ENCODE measurements at regions of chr12 and their contacts with region 1.

Region 1: GRCh38 chr12:22018860-22019259 is 27.2 kb upstream of the CMAS start:
- DNase-seq: peak in 2 of 9 experiments; percentile 6 to 26
- ATAC-seq: no peak
- H3K4me3 ChIP-seq: no peak overlapping the region
- H3K4me3 Mint-ChIP-seq: no peak overlapping the region
- H3K27ac ChIP-seq: no peak overlapping the region
- H3K27ac Mint-ChIP-seq: no peak overlapping the region
- H3K4me1 ChIP-seq: no peaks in the 10 kb centered on the region
- H3K4me1 Mint-ChIP-seq: no peaks in the 10 kb centered on the region
- H3K27me3 ChIP-seq: no peaks in the 10 kb centered on the region
- H3K27me3 Mint-ChIP-seq: peaks cover 3% of the 10 kb centered on the region
- CTCF ChIP-seq: peak; percentile 55

Region 2: DNA sequence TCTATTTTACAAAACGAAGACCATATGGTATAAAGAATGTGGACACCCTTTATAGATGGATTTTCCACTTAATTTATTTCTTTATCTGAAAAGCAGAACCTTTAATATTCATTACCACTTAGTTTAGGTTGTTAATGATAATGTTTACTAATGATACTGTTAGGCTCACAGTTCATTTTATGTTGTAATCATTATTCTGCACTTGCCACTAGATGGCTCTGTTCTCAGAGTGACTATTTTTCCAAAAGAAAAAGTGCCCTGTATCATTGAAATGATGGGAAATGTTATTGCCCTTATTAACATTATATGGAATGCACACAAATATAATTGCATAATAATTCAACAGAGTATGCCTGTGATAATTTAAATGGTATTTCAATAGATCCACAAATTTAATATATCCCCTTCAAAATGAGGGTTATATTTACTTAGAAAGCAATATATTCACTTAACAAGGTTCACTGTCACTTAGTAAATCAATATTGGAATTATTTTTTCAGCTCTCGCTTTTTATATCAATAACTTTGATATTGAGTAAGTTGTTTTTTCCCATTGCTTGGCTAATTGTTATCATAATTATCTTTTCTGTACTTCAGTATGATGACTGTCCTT is 1554.8 kb before region 1 on chr12:
- CTCF ChIA-PET with region 1: no interaction called
- POLR2A ChIA-PET with region 1: no interaction called
- intact Hi-C with region 1: loop called in 1 of 2 experiments (anchors 10 kb)
- DNase-seq: no peak
- ATAC-seq: no peak
- H3K4me3 ChIP-seq: no peak overlapping the region
- H3K4me3 Mint-ChIP-seq: no peak overlapping the region
- H3K27ac ChIP-seq: no peak overlapping the region
- H3K27ac Mint-ChIP-seq: no peak overlapping the region
- H3K4me1 ChIP-seq: no peaks in the 10 kb centered on the region
- H3K4me1 Mint-ChIP-seq: no peaks in the 10 kb centered on the region
- H3K27me3 ChIP-seq: no peaks in the 10 kb centered on the region
- H3K27me3 Mint-ChIP-seq: no peaks in the 10 kb centered on the region
- CTCF ChIP-seq: peak; percentile 32

Region 3: DNA sequence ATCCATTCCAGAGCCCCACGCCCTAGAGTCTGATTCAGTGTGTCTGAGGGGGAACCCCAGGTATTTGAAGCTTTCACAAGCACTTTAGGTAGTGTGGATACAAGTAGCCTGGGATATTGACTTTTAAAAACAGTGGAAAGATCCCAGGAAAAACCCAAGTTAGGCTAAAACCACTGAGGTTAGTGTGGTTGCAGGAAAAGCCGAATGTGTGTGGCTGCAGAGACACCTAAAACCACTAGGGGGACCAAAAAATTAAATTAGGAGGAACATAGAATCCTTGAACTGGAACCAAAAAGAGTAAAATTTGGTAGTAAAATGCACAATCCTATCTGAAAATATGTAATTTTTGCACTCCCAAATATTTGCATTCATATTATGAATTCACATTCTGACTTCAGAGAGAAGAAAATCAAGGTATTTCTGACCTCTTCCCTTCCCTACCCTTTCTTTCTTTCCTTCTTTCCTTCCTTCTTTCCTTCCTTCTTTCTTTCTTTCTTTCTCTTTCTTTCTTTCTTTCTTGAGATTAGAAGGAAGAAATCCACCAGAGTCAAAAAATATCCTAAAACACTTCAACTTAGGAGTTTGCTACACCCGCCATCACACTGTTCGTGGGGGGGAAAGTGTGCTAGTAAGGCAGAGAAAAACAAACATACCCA is 722.0 kb before region 1 on chr12:
- CTCF ChIA-PET with region 1: no interaction called
- POLR2A ChIA-PET with region 1: no interaction called
- intact Hi-C with region 1: loop called (anchors 1 to 5 kb)
- DNase-seq: peak in 2 of 9 experiments; percentile 10 to 29
- ATAC-seq: no peak
- H3K4me3 ChIP-seq: no peak overlapping the region
- H3K4me3 Mint-ChIP-seq: no peak overlapping the region
- H3K27ac ChIP-seq: no peak overlapping the region
- H3K27ac Mint-ChIP-seq: no peak overlapping the region
- H3K4me1 ChIP-seq: no peaks in the 10 kb centered on the region
- H3K4me1 Mint-ChIP-seq: peaks cover 2% of the 10 kb centered on the region
- H3K27me3 ChIP-seq: no peaks in the 10 kb centered on the region
- H3K27me3 Mint-ChIP-seq: peaks cover 3% of the 10 kb centered on the region
- CTCF ChIP-seq: peak; percentile 71

Region 4: DNA sequence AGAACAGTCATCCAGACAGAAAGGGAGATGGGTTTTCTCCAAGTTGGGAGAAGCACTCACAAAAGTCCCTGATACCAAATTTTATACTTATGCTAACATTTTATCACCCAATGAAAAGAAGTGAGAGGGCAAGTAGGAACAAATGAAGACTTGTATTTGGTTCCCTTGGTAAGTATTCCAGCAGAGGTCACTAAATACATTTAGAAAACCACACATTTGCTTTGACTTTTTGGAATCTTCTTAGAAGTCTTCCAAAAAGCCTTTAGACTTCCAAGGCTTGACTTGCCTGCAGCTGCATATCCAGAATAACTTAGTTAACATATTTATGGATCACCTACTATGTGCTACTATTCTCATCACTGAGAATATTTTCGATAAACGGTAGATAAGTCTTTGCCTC is 411.2 kb before region 1 on chr12:
- CTCF ChIA-PET with region 1: interaction called, 4 read pairs
- POLR2A ChIA-PET with region 1: no interaction called
- intact Hi-C with region 1: loop called in 1 of 2 experiments (anchors 10 kb)
- DNase-seq: peak in 2 of 9 experiments; percentile 38 to 57
- ATAC-seq: no peak
- H3K4me3 ChIP-seq: no peak overlapping the region
- H3K4me3 Mint-ChIP-seq: no peak overlapping the region
- H3K27ac ChIP-seq: no peak overlapping the region
- H3K27ac Mint-ChIP-seq: no peak overlapping the region
- H3K4me1 ChIP-seq: peaks cover 10% of the 10 kb centered on the region
- H3K4me1 Mint-ChIP-seq: peaks cover 10% of the 10 kb centered on the region
- H3K27me3 ChIP-seq: no peaks in the 10 kb centered on the region
- H3K27me3 Mint-ChIP-seq: no peaks in the 10 kb centered on the region
- CTCF ChIP-seq: peak; percentile 18